Body of pancreas (tissue), 4 donors: ENCODE measurements at regions of chr1 and their contacts with region 1.

Region 1: GRCh38 chr1:239315631-239316217 is 70.6 kb upstream of the CHRM3 start:
- DNase-seq: no peak
- ATAC-seq: peak; percentile 94
- H3K4me3 ChIP-seq: peak overlapping the region in 1 of 2 donors; percentile 17
- H3K27ac ChIP-seq: peak overlapping the region; percentile 62 to 92 (median 84)
- H3K4me1 ChIP-seq: peaks cover 23% of the 10 kb centered on the region
- H3K27me3 ChIP-seq: no peaks in the 10 kb centered on the region
- CTCF ChIP-seq: no peak
- POLR2A ChIP-seq: peak in 2 of 3 donors; percentile 59 to 62

Region 2: DNA sequence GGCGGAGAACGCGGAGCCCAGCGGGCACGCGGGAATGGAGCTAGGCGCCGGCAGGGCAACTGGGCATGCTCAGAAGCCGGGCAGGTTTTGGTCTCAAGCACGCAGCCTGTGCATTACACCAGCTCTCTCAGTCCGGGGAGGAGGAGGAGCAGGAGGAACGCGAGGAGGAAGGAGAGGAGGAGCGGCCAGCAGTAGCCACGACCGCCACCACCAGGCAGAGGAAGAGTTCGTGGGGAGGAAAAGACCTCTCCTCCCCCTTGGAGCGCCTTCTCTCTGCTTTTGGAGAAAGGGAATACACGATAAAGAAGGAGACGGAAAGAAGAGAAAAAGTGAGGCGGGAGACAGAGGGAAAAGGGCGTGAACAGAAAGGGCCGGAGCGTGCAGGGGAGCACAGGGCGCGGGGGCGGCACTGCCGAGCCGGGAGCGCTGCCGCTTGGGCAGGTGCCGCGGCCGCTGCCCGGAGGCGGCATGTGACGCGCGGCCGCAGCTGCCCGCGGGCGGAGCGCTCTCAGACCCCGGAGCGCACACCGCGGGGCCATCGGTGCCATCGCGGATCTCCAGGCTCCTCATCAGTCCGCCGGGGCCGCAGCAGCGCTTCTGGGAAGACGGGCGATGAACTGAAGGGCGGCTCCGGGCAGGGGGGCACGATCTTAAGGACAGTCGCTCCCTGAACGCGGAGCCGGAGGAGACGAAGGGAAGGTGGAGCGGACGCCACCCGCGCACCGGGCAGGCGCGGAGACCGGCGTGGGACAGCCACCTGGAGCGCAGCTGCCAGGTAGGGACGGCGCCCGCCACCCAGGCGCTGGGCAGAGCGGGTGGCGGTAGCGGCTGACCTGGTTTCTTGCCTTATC is 71.0 kb after region 1 on chr1 and contains the start of gene CHRM3:
- intact Hi-C with region 1: loop called (anchors 10 kb)
- DNase-seq: peak; percentile 91 to 95 (median 94)
- ATAC-seq: peak; percentile 89
- H3K4me3 ChIP-seq: peak within 1 kb of the TSS; percentile 29 to 61
- H3K27ac ChIP-seq: peak within 1 kb of the TSS; percentile 93 to 97 (median 94)
- H3K4me1 ChIP-seq: peaks cover 26% of the 10 kb centered on the region
- H3K27me3 ChIP-seq: no peaks in the 10 kb centered on the region
- CTCF ChIP-seq: peak in 6 of 7 experiments; percentile 3 to 89 (median 58)
- POLR2A ChIP-seq: peak; percentile 74 to 94 (median 93)
- total RNA-seq, gene CHRM3: 57.4 to 67.2 TPM